ENCODE measurements at regions of chr15 and their contacts with region 1.

Region 1: GRCh38 chr15:55290528-55291057 is 980 bp upstream of the RAB27A start:
- DNase-seq: peak; percentile 81 to 83
- ATAC-seq: peak; percentile 89 to 97 (median 94)
- H3K4me3 ChIP-seq: peak overlapping the region; percentile 70 to 92 (median 85)
- H3K27ac ChIP-seq: peak overlapping the region in 9 of 10 donors; percentile 77 to 98 (median 88)
- H3K4me1 ChIP-seq: peaks cover 0 to 32% (median 11%) of the 10 kb centered on the region in 9 donors
- H3K27me3 ChIP-seq: no peaks in the 10 kb centered on the region
- CTCF ChIP-seq: peak; percentile 66 to 97 (median 88)

Region 2: GRCh38 chr15:55196458-55197361 is 93.9 kb before region 1 on chr15 and contains the start of gene RSL24D1:
- intact Hi-C with region 1: loop called in 1 of 10 experiments (anchors 5 kb)
- DNase-seq: peak; percentile 93 to 97
- ATAC-seq: peak; percentile 99 to 100 (median 100)
- H3K4me3 ChIP-seq: peak within 1 kb of the TSS; percentile 61 to 98 (median 82)
- H3K27ac ChIP-seq: peak within 1 kb of the TSS; percentile 60 to 95 (median 91)
- H3K4me1 ChIP-seq: peaks cover 0 to 46% (median 25%) of the 10 kb centered on the region in 9 donors
- H3K27me3 ChIP-seq: no peaks in the 10 kb centered on the region
- CTCF ChIP-seq: peak in 8 of 9 donors; percentile 20 to 60 (median 44)
- total RNA-seq, gene RSL24D1: 38.0 to 53.1 (median 40.5) TPM

Region 3: GRCh38 chr15:55348281-55348778 is 57.7 kb after region 1 on chr15:
- intact Hi-C with region 1: no loop called
- DNase-seq: no peak
- ATAC-seq: no peak
- H3K4me3 ChIP-seq: no peak overlapping the region
- H3K27ac ChIP-seq: no peak overlapping the region
- H3K4me1 ChIP-seq: peaks cover 0 to 4% (median 0%) of the 10 kb centered on the region in 9 donors
- H3K27me3 ChIP-seq: no peaks in the 10 kb centered on the region
- CTCF ChIP-seq: no peak